ENCODE measurements at regions of chr1 and their contacts with region 1.

Region 1: DNA sequence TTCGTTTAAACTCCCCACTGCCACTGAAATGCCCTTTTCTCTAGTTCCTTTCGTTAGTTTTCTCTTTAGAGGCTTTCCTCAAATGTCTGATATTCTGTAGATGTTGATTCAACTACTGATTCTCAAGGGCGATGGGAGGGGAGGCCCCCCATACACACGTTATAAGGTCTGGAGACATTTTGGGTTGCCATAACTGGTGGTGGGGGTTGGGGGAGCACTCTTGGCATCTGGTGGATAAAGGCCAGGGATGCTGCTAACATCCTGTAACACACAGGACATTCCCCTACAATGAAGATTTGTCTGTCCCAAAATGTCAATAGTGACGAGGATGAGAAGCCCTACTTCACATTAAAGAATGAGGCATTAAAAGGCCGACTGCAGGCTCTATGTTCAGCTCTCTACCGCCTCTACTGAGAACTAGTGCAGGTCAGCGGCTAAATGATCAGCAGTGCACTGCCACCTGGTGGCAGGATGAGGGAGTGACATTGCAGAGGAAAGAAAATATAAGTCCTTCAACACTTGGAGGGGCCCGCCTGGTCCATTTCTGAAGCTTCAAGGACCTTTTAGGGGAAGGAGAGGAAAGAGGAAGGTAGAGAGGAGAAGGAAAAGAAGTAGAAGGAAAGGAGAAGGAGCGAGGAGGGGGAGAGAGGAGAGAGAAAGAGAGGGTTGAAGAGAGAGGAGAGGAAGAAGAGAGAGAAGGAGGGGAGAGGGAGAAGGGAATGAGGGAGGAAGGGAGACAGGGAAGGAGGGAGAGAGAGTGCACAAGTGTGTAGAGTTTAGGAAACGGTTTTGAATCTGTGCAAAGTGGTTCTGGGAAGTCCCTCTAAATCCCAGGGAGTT is 29.4 kb downstream of the ALG14 start:
- DNase-seq: peak; percentile 75 to 93 (median 84)
- H3K4me3 ChIP-seq: peak overlapping the region in 15 of 59 donors; percentile 0 to 36 (median 18)
- H3K27ac ChIP-seq: peak overlapping the region in 47 of 59 donors; percentile 0 to 84 (median 53)
- H3K27me3 ChIP-seq: no peaks in the 10 kb centered on the region
- CTCF ChIP-seq: peak in 55 of 56 donors; percentile 97 to 100 (median 99)

Region 2: GRCh38 chr1:94522304-94522703 is 521.1 kb before region 1 on chr1:
- intact Hi-C with region 1: loop called in 1 of 2 experiments (anchors 10 kb)
- DNase-seq: no peak
- H3K4me3 ChIP-seq: no peak overlapping the region
- H3K27ac ChIP-seq: no peak overlapping the region
- H3K27me3 ChIP-seq: no peaks in the 10 kb centered on the region
- CTCF ChIP-seq: peak in 52 of 56 donors; percentile 30 to 72 (median 52)

Region 3: DNA sequence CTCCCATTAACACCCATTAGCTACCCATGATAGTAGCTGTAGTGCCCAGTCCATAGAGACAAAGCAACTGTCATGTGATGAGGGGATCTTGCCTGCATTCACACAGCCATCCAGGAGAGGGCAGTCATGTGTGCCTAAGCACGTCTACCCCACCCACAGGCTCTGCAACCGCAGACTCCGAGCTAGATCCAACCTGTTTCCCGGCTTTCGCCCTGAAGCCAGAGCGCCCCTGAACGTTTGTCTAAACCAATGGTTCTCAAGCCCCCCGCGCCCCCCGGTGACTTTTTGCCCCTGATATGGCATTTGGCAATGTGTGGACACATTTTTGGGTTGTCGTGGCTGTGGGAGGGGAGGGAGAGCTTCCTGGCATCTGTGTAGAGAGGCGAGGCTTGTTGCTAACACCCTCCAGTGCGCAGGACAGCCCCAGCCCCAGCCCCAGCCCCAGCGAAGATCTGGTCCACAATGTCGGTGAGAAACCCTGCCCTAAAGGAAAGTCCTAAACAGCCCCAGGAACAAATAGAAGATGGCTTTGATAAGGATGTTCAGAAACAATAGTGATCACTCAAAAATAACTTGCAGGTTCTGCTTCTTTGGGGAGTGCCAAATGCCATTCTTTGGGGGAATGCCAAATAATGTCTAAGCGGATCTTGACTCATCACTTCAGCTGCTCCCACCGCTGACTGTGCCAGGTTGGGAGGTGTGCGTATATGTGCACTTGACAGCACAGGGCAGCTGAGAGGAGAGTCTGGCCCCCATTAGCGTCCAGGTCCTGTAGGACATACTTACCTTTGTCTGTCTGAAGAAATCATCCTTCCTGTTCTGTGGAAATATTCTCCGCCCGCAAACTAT is 188.7 kb before region 1 on chr1:
- intact Hi-C with region 1: loop called (anchors 1 to 2 kb)
- DNase-seq: peak; percentile 73 to 92 (median 86)
- H3K4me3 ChIP-seq: peak overlapping the region; percentile 9 to 74 (median 51)
- H3K27ac ChIP-seq: peak overlapping the region in 39 of 59 donors; percentile 6 to 81 (median 51)
- H3K27me3 ChIP-seq: no peaks in the 10 kb centered on the region
- CTCF ChIP-seq: peak; percentile 76 to 98 (median 94)

Region 4: GRCh38 chr1:95072532-95073419 is 29.4 kb after region 1 on chr1 and contains the start of gene ALG14:
- intact Hi-C with region 1: no loop called
- DNase-seq: peak; percentile 89 to 94 (median 92)
- H3K4me3 ChIP-seq: peak within 1 kb of the TSS; percentile 47 to 92 (median 77)
- H3K27ac ChIP-seq: peak within 1 kb of the TSS; percentile 85 to 100 (median 98)
- H3K27me3 ChIP-seq: no peaks in the 10 kb centered on the region
- CTCF ChIP-seq: peak in 31 of 56 donors; percentile 2 to 54 (median 19)
- total RNA-seq, gene ALG14: 2.4 to 18.5 (median 8.3) TPM

Region 5: GRCh38 chr1:95084317-95085176 is 41.2 kb after region 1 on chr1:
- intact Hi-C with region 1: no loop called
- DNase-seq: peak in 2 of 10 donors; percentile 17 to 33
- H3K4me3 ChIP-seq: no peak overlapping the region
- H3K27ac ChIP-seq: no peak overlapping the region
- H3K27me3 ChIP-seq: no peaks in the 10 kb centered on the region
- CTCF ChIP-seq: peak; percentile 29 to 81 (median 65)